ENCODE measurements at regions of chr2 and their contacts with region 1.

Region 1: GRCh38 chr2:135913727-135914365 is 37.6 kb upstream of the MCM6 start:
- DNase-seq: peak; percentile 43
- H3K4me3 ChIP-seq: no peak overlapping the region
- H3K27ac ChIP-seq: no peak overlapping the region
- H3K4me1 ChIP-seq: no peaks in the 10 kb centered on the region
- H3K27me3 ChIP-seq: no peaks in the 10 kb centered on the region
- CTCF ChIP-seq: peak; percentile 35 to 79 (median 52)
- POLR2A ChIP-seq: no peak

Region 2: GRCh38 chr2:136384531-136385303 is 470.9 kb after region 1 on chr2:
- intact Hi-C with region 1: loop called (anchors 10 kb)
- DNase-seq: peak; percentile 57
- H3K4me3 ChIP-seq: no peak overlapping the region
- H3K27ac ChIP-seq: no peak overlapping the region
- H3K4me1 ChIP-seq: no peaks in the 10 kb centered on the region
- H3K27me3 ChIP-seq: no peaks in the 10 kb centered on the region
- CTCF ChIP-seq: peak; percentile 37 to 64 (median 49)
- POLR2A ChIP-seq: no peak